Gastrocnemius medialis (tissue), 4 donors: ENCODE measurements at regions of chr3 and their contacts with region 1.

Region 1: GRCh38 chr3:15505479-15506165 is 15.9 kb downstream of the COLQ start:
- DNase-seq: no peak
- ATAC-seq: peak; percentile 34 to 51
- H3K4me3 ChIP-seq: no peak overlapping the region
- H3K27ac ChIP-seq: peak overlapping the region; percentile 27 to 64 (median 42)
- H3K4me1 ChIP-seq: peaks cover 26 to 27% of the 10 kb centered on the region in 2 donors
- H3K27me3 ChIP-seq: no peaks in the 10 kb centered on the region
- CTCF ChIP-seq: no peak
- POLR2A ChIP-seq: no peak

Region 2: GRCh38 chr3:15427182-15427880 is 78.3 kb before region 1 on chr3 and contains the starts of genes EAF1 and METTL6:
- in situ Hi-C with region 1: no loop called
- intact Hi-C with region 1: loop called (anchors 1 kb)
- DNase-seq: peak; percentile 64 to 72
- ATAC-seq: peak; percentile 90 to 94
- H3K4me3 ChIP-seq: peak within 1 kb of the TSS; percentile 80 to 100 (median 90)
- H3K27ac ChIP-seq: peak within 1 kb of the TSS; percentile 85 to 88 (median 87)
- H3K4me1 ChIP-seq: peaks cover 33 to 40% of the 10 kb centered on the region in 2 donors
- H3K27me3 ChIP-seq: no peaks in the 10 kb centered on the region
- CTCF ChIP-seq: peak in 4 of 5 experiments; percentile 20 to 49 (median 48)
- POLR2A ChIP-seq: peak; percentile 25 to 43
- total RNA-seq, gene EAF1: 9.4 to 17.3 (median 10.5) TPM
- total RNA-seq, gene METTL6: 6.8 to 22.0 (median 7.8) TPM

Region 3: GRCh38 chr3:15467227-15468181 is 38.1 kb before region 1 on chr3:
- in situ Hi-C with region 1: no loop called
- intact Hi-C with region 1: loop called (anchors 2 kb)
- DNase-seq: peak; percentile 66 to 86
- ATAC-seq: peak; percentile 97
- H3K4me3 ChIP-seq: peak overlapping the region in 2 of 4 donors; percentile 11 to 13
- H3K27ac ChIP-seq: peak overlapping the region; percentile 85 to 95 (median 90)
- H3K4me1 ChIP-seq: peaks cover 12 to 16% of the 10 kb centered on the region in 2 donors
- H3K27me3 ChIP-seq: no peaks in the 10 kb centered on the region
- CTCF ChIP-seq: no peak
- POLR2A ChIP-seq: peak in 1 of 2 donors; percentile 54